ENCODE measurements at regions of chr4 and their contacts with region 1.

Region 1: DNA sequence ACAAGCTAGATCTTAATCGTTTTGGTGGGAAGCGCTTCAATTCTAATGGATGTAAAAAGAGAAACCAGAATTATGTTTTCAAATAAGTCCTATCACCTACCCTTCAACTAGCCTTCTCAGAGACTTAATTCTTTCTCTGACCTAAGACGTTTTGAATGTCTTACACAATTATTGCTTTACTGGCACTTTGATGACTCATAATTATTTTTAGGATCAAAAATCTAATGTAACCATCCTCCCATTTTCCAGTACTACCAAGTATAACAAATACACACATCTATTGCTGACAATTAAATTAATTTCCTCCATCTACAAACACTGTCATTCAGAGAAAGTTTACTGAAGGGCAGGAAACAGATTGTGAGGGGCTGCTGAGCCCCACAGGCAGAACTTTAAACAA is 108.6 kb downstream of the PPP3CA start:
- DNase-seq: no peak
- ATAC-seq: no peak
- H3K4me3 ChIP-seq: no peak overlapping the region
- H3K27ac ChIP-seq: no peak overlapping the region
- H3K4me1 ChIP-seq: no peaks in the 10 kb centered on the region
- H3K27me3 ChIP-seq: no peaks in the 10 kb centered on the region
- CTCF ChIP-seq: no peak

Region 2: GRCh38 chr4:101306764-101307615 is 68.3 kb after region 1 on chr4:
- CTCF ChIA-PET with region 1: interaction called, 11 read pairs
- POLR2A ChIA-PET with region 1: no interaction called
- in situ Hi-C with region 1: no loop called
- intact Hi-C with region 1: no loop called
- DNase-seq: no peak
- ATAC-seq: no peak
- H3K4me3 ChIP-seq: no peak overlapping the region
- H3K27ac ChIP-seq: no peak overlapping the region
- H3K4me1 ChIP-seq: peaks cover 8% of the 10 kb centered on the region
- H3K27me3 ChIP-seq: no peaks in the 10 kb centered on the region
- CTCF ChIP-seq: no peak

Region 3: GRCh38 chr4:101356928-101357327 is 118.2 kb after region 1 on chr4:
- CTCF ChIA-PET with region 1: no interaction called
- POLR2A ChIA-PET with region 1: no interaction called
- in situ Hi-C with region 1: no loop called
- intact Hi-C with region 1: no loop called
- DNase-seq: peak; percentile 65
- ATAC-seq: peak; percentile 90
- H3K4me3 ChIP-seq: no peak overlapping the region; a peak in 1 of 4 replicates
- H3K27ac ChIP-seq: peak overlapping the region; percentile 63
- H3K4me1 ChIP-seq: no peaks in the 10 kb centered on the region; the same call in 1 of the 2 replicates
- H3K27me3 ChIP-seq: no peaks in the 10 kb centered on the region
- CTCF ChIP-seq: no peak

Measured in Panc1 (cell line).